ENCODE measurements at regions of chr10 and their contacts with region 1.

Region 1: GRCh38 chr10:84335516-84335915 is 7.1 kb downstream of the CCSER2 start:
- DNase-seq: no peak
- ATAC-seq: no peak
- H3K4me3 ChIP-seq: no peak overlapping the region
- H3K4me3 Mint-ChIP-seq: no peak overlapping the region
- H3K27ac ChIP-seq: no peak overlapping the region
- H3K27ac Mint-ChIP-seq: no peak overlapping the region
- H3K4me1 ChIP-seq: peaks cover 12 to 13% of the 10 kb centered on the region in 2 donors
- H3K4me1 Mint-ChIP-seq: peaks cover 22% of the 10 kb centered on the region
- H3K27me3 ChIP-seq: no peaks in the 10 kb centered on the region
- H3K27me3 Mint-ChIP-seq: no peaks in the 10 kb centered on the region
- CTCF ChIP-seq: no peak

Region 2: DNA sequence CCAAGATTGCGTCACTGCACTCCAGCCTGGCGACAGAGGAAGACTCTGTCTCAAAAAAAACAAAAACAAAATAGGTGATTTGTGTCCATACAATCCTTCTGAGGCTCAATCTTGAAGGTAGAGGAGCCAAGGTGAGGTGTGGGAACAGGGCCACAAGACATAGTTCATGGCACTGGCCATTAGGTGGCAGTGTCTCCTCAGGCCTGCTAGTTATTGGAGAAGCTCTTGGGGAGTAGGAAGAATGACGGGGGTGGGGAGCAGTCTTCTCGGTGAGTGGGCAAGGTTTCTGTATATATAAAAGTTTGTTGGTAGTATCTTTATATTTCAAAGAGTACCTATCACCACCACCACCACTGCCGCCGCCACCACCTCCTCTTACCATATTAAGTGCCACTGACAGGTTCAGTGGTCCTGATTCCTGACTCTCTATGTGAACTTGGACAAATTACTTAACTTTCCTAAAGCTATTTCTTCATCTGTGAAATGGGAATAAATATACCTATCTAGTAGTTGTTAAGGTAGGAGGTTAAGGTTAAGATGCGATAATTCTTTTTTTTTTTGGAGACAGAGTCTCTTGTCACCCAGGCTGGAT is 16.8 kb after region 1 on chr10:
- CTCF ChIA-PET with region 1: interaction called, 14 read pairs
- POLR2A ChIA-PET with region 1: no interaction called
- intact Hi-C with region 1: no loop called
- DNase-seq: peak; percentile 62
- ATAC-seq: peak; percentile 88
- H3K4me3 ChIP-seq: no peak overlapping the region
- H3K4me3 Mint-ChIP-seq: no peak overlapping the region
- H3K27ac ChIP-seq: no peak overlapping the region
- H3K27ac Mint-ChIP-seq: no peak overlapping the region
- H3K4me1 ChIP-seq: no peaks in the 10 kb centered on the region
- H3K4me1 Mint-ChIP-seq: peaks cover 13% of the 10 kb centered on the region
- H3K27me3 ChIP-seq: no peaks in the 10 kb centered on the region
- H3K27me3 Mint-ChIP-seq: no peaks in the 10 kb centered on the region
- CTCF ChIP-seq: peak; percentile 78

Region 3: DNA sequence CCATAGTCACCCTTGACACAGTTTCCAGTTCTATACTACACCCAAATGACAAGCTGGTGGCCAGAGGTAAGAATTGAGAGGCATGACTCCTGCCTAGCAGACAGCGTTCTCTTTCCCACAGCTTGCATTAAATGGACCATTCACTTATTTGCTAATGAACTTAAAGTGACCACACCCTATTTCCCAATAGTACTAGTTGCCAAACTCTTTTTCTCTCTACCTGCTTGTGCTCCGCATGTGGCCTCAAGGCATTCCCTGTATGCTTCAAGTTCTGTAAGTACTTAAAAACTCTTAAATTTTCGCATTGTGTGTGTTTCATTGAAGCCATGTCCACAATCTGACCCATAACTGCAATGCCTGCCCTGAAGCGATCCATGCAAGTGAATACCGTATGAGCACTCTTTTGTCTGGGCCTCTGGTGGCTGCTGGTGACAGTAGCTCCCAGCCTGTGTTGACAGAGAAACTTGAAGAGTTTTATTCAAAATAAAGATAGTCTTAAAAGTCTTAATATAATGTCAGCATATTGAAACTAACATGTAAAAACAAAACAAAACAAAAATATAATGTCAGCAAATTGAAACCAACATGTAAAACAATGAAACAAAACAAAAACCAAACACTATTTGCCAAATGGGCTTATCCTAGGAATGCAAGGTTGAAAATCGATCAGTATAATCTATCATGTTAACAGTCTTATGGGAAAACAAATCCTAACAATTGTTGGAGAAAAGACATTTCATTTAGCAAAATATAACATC is 66.5 kb after region 1 on chr10:
- CTCF ChIA-PET with region 1: no interaction called
- POLR2A ChIA-PET with region 1: no interaction called
- intact Hi-C with region 1: no loop called
- DNase-seq: no peak
- ATAC-seq: no peak
- H3K4me3 ChIP-seq: no peak overlapping the region
- H3K4me3 Mint-ChIP-seq: no peak overlapping the region
- H3K27ac ChIP-seq: no peak overlapping the region
- H3K27ac Mint-ChIP-seq: no peak overlapping the region
- H3K4me1 ChIP-seq: no peaks in the 10 kb centered on the region
- H3K4me1 Mint-ChIP-seq: peaks cover 17% of the 10 kb centered on the region
- H3K27me3 ChIP-seq: no peaks in the 10 kb centered on the region
- H3K27me3 Mint-ChIP-seq: no peaks in the 10 kb centered on the region
- CTCF ChIP-seq: no peak